ENCODE measurements at regions of chr15 and their contacts with region 1.

Region 1: DNA sequence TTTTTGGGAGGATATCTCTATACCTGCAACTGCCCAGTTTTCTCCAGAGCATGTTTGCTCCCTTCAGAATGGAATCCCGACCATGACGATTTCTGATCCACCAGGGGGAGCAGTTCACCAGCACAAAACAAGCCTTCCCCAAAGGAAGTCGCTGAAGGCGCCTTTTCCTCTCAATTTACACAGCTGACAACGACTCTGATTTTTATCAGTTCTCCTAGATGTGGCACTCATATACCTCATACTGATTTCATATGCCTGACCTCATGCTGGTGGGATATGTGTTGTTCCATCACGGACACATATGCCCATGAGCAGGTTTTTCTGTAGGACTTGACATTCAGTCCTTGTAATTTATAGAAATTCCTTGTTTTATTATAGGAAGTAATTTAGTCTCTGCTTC is 1028.2 kb downstream of the MCTP2 start:
- DNase-seq: peak; percentile 47
- ATAC-seq: peak; percentile 95
- H3K4me3 ChIP-seq: no peak overlapping the region
- H3K27ac ChIP-seq: no peak overlapping the region
- H3K4me1 ChIP-seq: no peaks in the 10 kb centered on the region
- H3K27me3 ChIP-seq: no peaks in the 10 kb centered on the region
- CTCF ChIP-seq: peak; percentile 69 to 81 (median 75)
- EP300 ChIP-seq: no peak
- POLR2A ChIP-seq: no peak
- RAD21 ChIP-seq: peak; percentile 91

Region 2: DNA sequence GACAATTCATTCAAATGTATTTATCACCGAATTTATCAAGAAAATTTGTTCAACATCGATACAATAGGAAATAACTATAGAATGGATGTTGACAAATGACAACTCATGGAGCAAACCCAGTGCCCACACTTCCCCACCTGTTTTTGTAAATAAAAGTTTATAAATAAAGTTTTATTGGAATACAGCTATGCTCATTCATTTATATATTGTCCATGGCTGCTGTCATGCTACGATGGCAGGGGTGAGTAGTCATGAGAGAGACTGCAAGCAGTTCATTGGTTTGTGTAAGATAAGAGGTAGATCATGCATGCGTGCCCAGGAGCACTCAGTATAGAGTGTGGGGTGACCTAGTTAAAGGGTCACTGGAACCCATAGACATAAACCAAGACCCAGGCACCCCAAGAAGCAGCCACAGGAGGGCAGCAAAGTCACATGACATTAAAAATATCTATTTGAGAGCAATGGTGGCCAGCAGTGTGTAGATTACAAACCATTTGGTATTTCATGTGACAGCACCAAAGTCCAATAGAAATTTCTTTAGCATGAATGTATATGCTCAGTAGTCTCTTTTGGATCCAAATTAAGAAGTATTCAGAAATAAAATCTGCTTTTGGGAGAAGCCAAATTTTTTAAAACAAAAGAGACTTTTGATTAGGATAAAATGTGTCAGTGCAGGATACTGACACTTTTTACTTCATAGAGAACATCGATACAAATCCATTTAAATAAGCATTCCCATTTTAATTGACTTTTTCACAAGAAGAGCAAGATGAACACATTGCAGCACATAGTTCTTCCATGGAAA is 233.4 kb before region 1 on chr15:
- CTCF ChIA-PET with region 1: interaction called, 7 read pairs
- POLR2A ChIA-PET with region 1: no interaction called
- RAD21 ChIA-PET with region 1: no interaction called
- SMC1A ChIA-PET with region 1: no interaction called
- in situ Hi-C with region 1: no loop called
- intact Hi-C with region 1: loop called (anchors 5 kb)
- DNase-seq: no peak
- ATAC-seq: peak; percentile 95
- H3K4me3 ChIP-seq: no peak overlapping the region
- H3K27ac ChIP-seq: no peak overlapping the region
- H3K4me1 ChIP-seq: no peaks in the 10 kb centered on the region
- H3K27me3 ChIP-seq: no peaks in the 10 kb centered on the region
- CTCF ChIP-seq: peak; percentile 22 to 61 (median 38); a peak in 5 of 6 replicates
- EP300 ChIP-seq: no peak
- POLR2A ChIP-seq: no peak
- RAD21 ChIP-seq: peak; percentile 40; the same call in 1 of the 2 replicates

Region 3: DNA sequence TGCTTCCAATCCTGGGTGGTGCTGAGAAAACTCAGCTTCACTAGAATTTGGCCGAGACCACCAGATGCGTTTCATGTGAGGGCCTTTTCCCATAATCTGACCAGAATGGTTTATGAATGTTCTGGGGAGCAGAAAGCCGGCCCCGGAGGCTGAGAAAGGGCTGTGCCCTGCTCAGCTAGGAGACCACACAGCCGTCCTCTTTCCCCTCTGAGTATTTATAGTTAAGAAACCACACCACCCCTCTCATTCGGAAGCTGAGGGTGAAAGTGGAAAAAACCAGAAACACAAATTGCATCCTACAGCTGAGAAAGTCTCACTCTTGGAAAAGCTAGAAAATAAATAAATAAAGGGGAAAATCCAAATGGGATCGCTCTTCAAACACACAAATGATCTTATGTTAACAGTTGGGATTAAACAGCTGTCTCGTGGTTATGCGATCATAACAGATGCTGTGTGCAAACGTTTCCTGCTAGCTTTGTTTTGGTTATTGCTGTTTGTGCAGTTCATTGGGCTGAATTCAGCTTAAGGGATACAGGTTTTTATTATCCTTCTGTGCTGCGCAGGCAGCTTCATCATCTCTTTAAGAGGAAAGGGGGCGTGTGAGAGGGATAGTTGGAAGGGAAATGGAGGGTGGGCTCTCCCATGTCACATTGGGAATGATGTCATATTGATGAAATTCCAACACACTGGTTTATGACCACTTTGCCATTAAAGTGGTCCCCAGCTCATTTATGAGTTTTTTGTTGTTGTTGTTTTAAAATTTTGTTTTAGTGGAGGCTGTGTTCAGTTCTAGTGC is 44.8 kb after region 1 on chr15:
- CTCF ChIA-PET with region 1: interaction called, 4 read pairs
- POLR2A ChIA-PET with region 1: interaction called, 4 read pairs
- RAD21 ChIA-PET with region 1: interaction called, 10 read pairs
- SMC1A ChIA-PET with region 1: interaction called, 11 read pairs
- in situ Hi-C with region 1: no loop called
- intact Hi-C with region 1: no loop called
- DNase-seq: no peak
- ATAC-seq: peak; percentile 67
- H3K4me3 ChIP-seq: no peak overlapping the region
- H3K27ac ChIP-seq: no peak overlapping the region
- H3K4me1 ChIP-seq: no peaks in the 10 kb centered on the region
- H3K27me3 ChIP-seq: no peaks in the 10 kb centered on the region
- CTCF ChIP-seq: no peak
- EP300 ChIP-seq: no peak
- POLR2A ChIP-seq: no peak
- RAD21 ChIP-seq: no peak

Region 4: DNA sequence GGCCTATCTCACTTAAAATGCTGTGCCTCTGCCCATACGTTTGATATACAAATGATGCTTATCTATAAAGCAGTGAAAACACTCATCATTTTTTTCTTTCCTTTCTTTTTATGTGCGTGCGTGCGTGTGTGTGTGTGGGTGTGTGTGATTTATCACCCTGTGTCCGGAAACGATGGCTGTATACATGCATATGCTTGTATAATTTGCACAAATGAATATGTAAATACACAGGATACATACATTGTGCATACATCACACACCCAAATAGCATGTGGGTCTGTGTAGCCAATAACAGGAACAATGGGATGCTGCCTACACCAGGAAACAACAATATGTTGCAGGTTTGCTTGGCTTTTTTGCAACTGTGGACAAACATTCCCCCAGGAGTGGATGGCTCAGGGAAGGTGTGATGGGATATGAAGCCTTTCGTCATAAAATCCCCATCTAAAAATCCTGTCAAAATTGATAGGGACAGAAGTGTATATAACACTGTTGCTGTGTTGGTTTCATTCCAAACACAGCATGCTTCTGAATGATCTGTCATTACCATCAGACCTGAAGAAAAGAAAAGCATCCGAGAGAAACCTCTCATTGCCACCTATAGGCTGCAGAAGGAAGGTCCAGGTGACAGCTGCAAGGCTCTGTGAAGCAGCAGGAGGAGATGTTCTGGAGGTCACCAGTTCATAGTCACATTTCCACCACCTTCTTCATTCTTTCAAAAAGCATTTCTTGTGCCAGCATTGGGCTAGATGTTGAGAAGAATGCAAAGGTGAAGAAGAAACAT is 567.1 kb after region 1 on chr15:
- CTCF ChIA-PET with region 1: interaction called, 13 read pairs
- POLR2A ChIA-PET with region 1: no interaction called
- RAD21 ChIA-PET with region 1: interaction called, 10 read pairs
- SMC1A ChIA-PET with region 1: interaction called, 15 read pairs
- in situ Hi-C with region 1: loop called (anchors 10 kb)
- intact Hi-C with region 1: loop called (anchors 5 kb)
- DNase-seq: no peak
- ATAC-seq: peak; percentile 77
- H3K4me3 ChIP-seq: no peak overlapping the region
- H3K27ac ChIP-seq: no peak overlapping the region
- H3K4me1 ChIP-seq: no peaks in the 10 kb centered on the region
- H3K27me3 ChIP-seq: no peaks in the 10 kb centered on the region
- CTCF ChIP-seq: peak; percentile 33 to 45 (median 35); a peak in 4 of 6 replicates
- EP300 ChIP-seq: no peak
- POLR2A ChIP-seq: no peak
- RAD21 ChIP-seq: peak; percentile 62

Region 5: DNA sequence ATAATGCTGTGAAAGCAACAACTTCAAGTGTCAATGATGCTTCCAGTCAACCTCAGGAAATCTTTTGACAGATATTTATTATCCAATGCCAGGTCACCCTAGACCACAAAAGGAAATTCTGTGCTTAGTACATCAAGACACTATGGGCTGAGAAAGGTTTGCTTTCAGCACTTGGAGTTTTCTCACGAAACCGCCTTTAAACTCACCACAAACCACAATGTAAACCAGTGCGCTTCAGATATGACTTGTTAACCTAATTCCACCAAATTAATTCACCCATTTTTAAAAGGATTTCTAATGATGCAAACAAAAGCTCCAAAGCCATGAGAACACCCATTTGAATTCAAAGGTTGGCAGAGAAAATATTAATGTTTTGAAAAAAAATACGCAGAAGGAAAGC is 778.1 kb after region 1 on chr15:
- CTCF ChIA-PET with region 1: interaction called, 3 read pairs
- POLR2A ChIA-PET with region 1: no interaction called
- RAD21 ChIA-PET with region 1: interaction called, 4 read pairs
- SMC1A ChIA-PET with region 1: interaction called, 4 read pairs
- in situ Hi-C with region 1: no loop called
- intact Hi-C with region 1: loop called (anchors 5 kb)
- DNase-seq: peak; percentile 93
- ATAC-seq: peak; percentile 73
- H3K4me3 ChIP-seq: no peak overlapping the region
- H3K27ac ChIP-seq: peak overlapping the region; percentile 6; the same call in 1 of the 2 replicates
- H3K4me1 ChIP-seq: peaks cover 37% of the 10 kb centered on the region
- H3K27me3 ChIP-seq: no peaks in the 10 kb centered on the region
- CTCF ChIP-seq: no peak
- EP300 ChIP-seq: peak; percentile 89 to 92
- POLR2A ChIP-seq: no peak
- RAD21 ChIP-seq: peak; percentile 10; the same call in 1 of the 2 replicates

Measured in GM12878 (cell line).